HCT116 (cell line): ENCODE measurements at regions of chr17 and their contacts with region 1.

Region 1: DNA sequence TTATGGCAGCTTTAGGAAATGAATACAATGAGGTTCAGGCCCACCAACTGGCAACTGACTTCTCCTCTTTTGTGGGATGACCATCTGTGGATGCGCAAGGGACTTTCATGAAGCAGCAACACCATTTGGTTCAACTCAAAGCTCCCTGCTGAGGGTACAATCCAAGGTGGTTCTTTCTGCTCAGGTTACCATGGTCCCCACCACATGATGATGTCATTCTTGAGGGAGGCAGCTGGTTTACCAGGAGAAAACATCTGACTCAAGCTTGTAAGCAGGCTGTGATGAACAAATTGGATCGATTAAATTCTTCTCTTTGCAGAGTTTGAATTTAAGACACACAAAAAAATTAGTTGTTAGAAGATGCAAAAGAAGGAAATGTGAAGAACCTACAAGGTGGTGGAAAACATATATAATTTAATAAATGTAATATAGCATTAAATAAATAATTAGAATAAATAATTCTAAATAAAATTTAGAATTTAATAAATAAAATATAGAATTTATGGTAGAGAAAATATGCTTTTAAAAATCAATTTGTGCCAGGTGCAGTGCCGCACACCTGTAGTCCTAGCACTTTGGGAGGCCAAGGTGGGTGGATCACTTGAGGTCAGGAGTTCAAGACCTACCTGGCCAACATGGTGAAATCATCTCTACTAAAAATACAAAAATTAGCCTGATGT is 67.5 kb upstream of the ANKFN1 start:
- DNase-seq: no peak
- ATAC-seq: no peak
- H3K4me3 ChIP-seq: no peak overlapping the region
- H3K27ac ChIP-seq: no peak overlapping the region
- H3K4me1 ChIP-seq: no peaks in the 10 kb centered on the region
- H3K27me3 ChIP-seq: peaks cover 7% of the 10 kb centered on the region; the same call in 1 of the 2 replicates
- CTCF ChIP-seq: no peak
- POLR2A ChIP-seq: no peak
- RAD21 ChIP-seq: no peak

Region 2: DNA sequence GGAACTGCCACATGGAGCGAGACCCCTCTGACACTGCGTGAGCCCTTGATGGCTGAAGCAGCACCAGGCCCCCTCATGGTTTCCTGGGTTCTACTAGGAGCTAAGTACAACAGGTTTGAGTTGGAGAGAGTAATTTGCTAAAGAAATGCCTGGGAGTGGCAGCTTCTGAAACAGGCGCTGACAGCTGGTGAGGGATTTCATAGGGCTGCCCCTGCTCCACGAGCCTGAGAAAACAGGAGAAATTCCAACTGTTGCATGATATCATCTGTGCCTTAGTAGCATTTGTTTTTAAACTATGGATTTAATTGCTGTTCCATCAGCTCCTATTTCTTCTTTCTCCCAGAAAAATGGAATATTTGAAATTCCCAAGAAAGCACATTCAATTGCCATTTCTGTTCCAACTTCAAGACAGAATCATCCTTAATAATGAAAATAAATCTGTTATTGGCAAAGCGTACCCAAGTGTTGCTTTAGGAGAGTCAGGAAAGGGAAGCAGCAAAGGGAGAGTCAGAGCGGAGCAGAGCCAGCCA is 11.3 kb before region 1 on chr17:
- CTCF ChIA-PET with region 1: no interaction called
- POLR2A ChIA-PET with region 1: no interaction called
- RAD21 ChIA-PET with region 1: no interaction called
- intact Hi-C with region 1: no loop called
- DNase-seq: no peak
- ATAC-seq: no peak
- H3K4me3 ChIP-seq: no peak overlapping the region
- H3K27ac ChIP-seq: no peak overlapping the region
- H3K4me1 ChIP-seq: no peaks in the 10 kb centered on the region
- H3K27me3 ChIP-seq: no peaks in the 10 kb centered on the region
- CTCF ChIP-seq: no peak
- POLR2A ChIP-seq: no peak
- RAD21 ChIP-seq: no peak

Region 3: DNA sequence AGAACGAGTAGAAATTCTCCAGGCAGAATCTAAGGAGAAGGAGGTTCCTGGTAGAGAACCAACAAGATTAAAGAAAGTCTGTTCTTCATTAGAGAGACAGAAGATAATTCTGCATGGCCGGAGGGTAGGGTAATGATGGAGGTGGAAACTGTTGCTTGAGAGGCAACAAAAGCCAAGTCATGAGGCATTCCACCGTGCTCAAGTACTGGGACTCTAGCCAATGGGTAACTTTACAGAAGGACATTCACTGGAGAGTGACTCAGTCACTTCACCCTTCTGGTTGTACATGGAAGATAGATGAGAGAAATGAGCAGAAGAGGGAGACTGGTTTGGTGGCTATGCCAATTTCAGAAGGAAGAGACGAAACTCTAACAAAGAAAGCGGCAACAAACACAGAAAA is 13.9 kb after region 1 on chr17:
- CTCF ChIA-PET with region 1: no interaction called
- POLR2A ChIA-PET with region 1: no interaction called
- RAD21 ChIA-PET with region 1: no interaction called
- intact Hi-C with region 1: loop called (anchors 1 kb)
- DNase-seq: no peak
- ATAC-seq: no peak
- H3K4me3 ChIP-seq: no peak overlapping the region
- H3K27ac ChIP-seq: no peak overlapping the region
- H3K4me1 ChIP-seq: no peaks in the 10 kb centered on the region
- H3K27me3 ChIP-seq: peaks cover 24% of the 10 kb centered on the region; the same call in 1 of the 2 replicates
- CTCF ChIP-seq: no peak
- POLR2A ChIP-seq: no peak
- RAD21 ChIP-seq: no peak

Region 4: DNA sequence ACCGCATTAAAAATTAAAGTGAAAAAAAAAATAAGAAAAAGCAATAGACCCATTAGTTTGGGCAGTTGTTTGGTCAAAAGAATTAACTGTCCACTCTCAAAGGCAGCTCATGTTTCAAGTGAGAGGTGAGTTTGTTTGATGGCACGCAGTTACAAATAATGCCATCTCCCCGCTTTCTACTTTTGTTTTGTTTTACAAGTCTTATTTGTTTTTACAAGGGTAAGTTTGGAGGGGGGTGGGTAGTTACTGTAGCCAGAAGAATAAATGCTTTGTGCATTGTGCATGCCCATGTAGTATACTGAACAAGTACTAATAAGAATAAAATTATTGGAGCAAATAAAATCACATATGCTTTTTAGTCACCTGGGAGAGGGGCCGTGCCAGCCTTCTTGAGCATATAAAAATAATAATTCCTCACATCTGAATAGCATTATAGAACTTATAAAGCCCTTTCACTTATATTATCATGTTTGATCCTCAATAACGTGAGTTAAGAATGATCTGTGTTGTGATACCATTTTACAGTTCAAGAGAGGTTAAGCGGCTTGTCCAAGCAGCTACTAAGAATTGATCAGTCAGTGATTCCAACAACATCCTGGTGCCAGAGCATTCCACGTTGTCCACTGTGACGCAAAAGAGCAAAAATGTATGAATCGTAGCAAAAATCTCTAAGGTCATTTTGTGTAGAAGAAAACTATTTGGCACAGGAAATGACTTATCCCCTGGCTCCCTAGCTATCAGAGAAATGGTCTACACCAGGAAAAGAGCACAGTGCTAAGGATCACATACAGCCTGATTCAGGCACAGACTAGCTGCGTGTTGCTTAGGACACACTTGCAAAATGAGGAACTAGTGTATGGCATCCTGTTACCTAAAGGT is 100.4 kb after region 1 on chr17:
- CTCF ChIA-PET with region 1: no interaction called
- POLR2A ChIA-PET with region 1: no interaction called
- RAD21 ChIA-PET with region 1: no interaction called
- intact Hi-C with region 1: no loop called
- DNase-seq: no peak
- ATAC-seq: no peak
- H3K4me3 ChIP-seq: no peak overlapping the region
- H3K27ac ChIP-seq: no peak overlapping the region
- H3K4me1 ChIP-seq: no peaks in the 10 kb centered on the region
- H3K27me3 ChIP-seq: peaks cover 3% of the 10 kb centered on the region; the same call in 1 of the 2 replicates
- CTCF ChIP-seq: no peak
- POLR2A ChIP-seq: no peak
- RAD21 ChIP-seq: no peak